ENCODE measurements at regions of chr19 and their contacts with region 1.

Region 1: GRCh38 chr19:10095948-10096621 is 6.4 kb downstream of the ANGPTL6 start:
- DNase-seq: peak; percentile 97
- ATAC-seq: peak; percentile 87
- H3K4me3 Mint-ChIP-seq: peak overlapping the region; percentile 32
- H3K27ac Mint-ChIP-seq: peak overlapping the region; percentile 59
- H3K4me1 Mint-ChIP-seq: peaks cover 50% of the 10 kb centered on the region
- H3K27me3 Mint-ChIP-seq: no peaks in the 10 kb centered on the region
- CTCF ChIP-seq: no peak

Region 2: GRCh38 chr19:10085641-10086590 is 10.2 kb before region 1 on chr19 and contains the start of gene SHFL:
- CTCF ChIA-PET with region 1: no interaction called
- POLR2A ChIA-PET with region 1: interaction called, 7 read pairs
- intact Hi-C with region 1: loop called (anchors 1 kb)
- DNase-seq: peak; percentile 82
- ATAC-seq: peak; percentile 92
- H3K4me3 Mint-ChIP-seq: peak within 1 kb of the TSS; percentile 90
- H3K27ac Mint-ChIP-seq: peak within 1 kb of the TSS; percentile 85
- H3K4me1 Mint-ChIP-seq: peaks cover 14% of the 10 kb centered on the region
- H3K27me3 Mint-ChIP-seq: no peaks in the 10 kb centered on the region
- CTCF ChIP-seq: no peak
- total RNA-seq, gene SHFL: 61.3 and 61.4 TPM in 2 replicates

Region 3: GRCh38 chr19:10112895-10113591 is 17.0 kb after region 1 on chr19:
- CTCF ChIA-PET with region 1: interaction called, 41 read pairs
- POLR2A ChIA-PET with region 1: interaction called, 297 read pairs
- intact Hi-C with region 1: loop called (anchors 1 kb)
- DNase-seq: peak; percentile 66
- ATAC-seq: peak; percentile 49
- H3K4me3 Mint-ChIP-seq: peak overlapping the region; percentile 76
- H3K27ac Mint-ChIP-seq: peak overlapping the region; percentile 82
- H3K4me1 Mint-ChIP-seq: peaks cover 40% of the 10 kb centered on the region
- H3K27me3 Mint-ChIP-seq: no peaks in the 10 kb centered on the region
- CTCF ChIP-seq: no peak

Region 4: DNA sequence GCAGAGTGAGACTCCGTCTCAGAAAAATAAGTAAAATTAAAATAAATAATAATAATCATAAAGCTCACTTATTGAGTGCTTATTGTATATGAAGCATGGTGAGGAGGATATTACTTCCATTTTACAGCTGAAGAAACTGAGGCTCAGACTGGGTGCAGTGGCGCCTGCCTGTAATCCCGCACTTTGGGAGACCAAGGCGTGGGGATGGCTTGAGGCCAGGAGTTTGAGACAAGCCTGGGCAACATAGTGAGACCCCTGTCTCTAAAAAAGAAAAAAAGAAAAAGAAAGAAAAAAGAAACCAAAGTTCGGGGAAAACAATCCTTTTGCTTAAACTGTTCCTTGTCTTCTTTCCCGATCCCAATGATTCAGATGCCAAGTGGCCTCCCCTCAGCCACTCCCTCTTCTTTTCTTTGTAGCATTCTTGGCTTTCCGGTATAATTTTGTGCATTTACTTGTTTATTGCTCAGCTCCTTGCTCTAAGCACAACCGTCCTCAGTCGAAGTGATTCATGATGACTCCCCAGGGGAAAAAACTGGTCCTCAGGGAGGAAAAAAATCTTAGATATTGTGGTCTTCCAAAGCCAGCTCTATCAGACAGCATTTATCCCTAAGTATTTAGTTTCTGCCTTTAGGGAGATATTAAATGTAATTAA is 24.6 kb after region 1 on chr19:
- CTCF ChIA-PET with region 1: interaction called, 6 read pairs
- POLR2A ChIA-PET with region 1: interaction called, 297 read pairs
- intact Hi-C with region 1: loop called (anchors 1 kb)
- DNase-seq: no peak
- ATAC-seq: no peak
- H3K4me3 Mint-ChIP-seq: no peak overlapping the region
- H3K27ac Mint-ChIP-seq: no peak overlapping the region
- H3K4me1 Mint-ChIP-seq: peaks cover 29% of the 10 kb centered on the region
- H3K27me3 Mint-ChIP-seq: no peaks in the 10 kb centered on the region
- CTCF ChIP-seq: no peak

Region 5: GRCh38 chr19:10180463-10180862 is 84.4 kb after region 1 on chr19:
- CTCF ChIA-PET with region 1: no interaction called
- POLR2A ChIA-PET with region 1: interaction called, 10 read pairs
- intact Hi-C with region 1: no loop called
- DNase-seq: no peak
- ATAC-seq: no peak
- H3K4me3 Mint-ChIP-seq: no peak overlapping the region
- H3K27ac Mint-ChIP-seq: no peak overlapping the region
- H3K4me1 Mint-ChIP-seq: no peaks in the 10 kb centered on the region
- H3K27me3 Mint-ChIP-seq: no peaks in the 10 kb centered on the region
- CTCF ChIP-seq: no peak

Region 6: DNA sequence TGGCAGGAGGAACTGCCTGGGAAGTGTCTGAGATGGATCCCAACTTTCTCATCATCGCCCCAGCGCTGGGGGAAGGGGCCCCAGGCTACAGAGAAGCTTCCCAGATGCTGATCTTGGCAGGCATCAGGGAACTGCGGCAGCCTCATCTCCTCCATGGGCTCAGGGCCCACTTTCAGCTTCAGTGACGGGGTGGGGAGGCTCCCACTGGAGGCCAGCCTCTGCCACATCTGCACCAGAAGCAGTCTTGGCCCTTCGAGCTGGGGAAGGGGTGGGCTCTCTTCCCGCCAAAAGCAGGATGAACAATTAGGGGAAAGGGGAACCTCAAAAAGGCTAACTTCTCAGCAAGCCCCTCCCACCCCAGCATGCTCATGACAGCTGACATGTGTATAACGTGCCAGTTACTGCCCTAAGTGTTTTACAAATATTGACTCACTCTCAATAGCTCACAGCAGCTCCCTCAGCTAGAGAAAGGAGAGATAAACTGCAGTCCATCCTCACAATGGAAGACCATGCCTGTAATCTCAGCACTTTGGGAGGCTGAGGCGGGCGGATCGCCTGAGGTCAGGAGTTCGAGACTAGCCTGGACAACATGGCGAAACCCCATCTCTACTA is 142.2 kb after region 1 on chr19:
- CTCF ChIA-PET with region 1: no interaction called
- POLR2A ChIA-PET with region 1: interaction called, 15 read pairs
- intact Hi-C with region 1: no loop called
- DNase-seq: no peak
- ATAC-seq: no peak
- H3K4me3 Mint-ChIP-seq: no peak overlapping the region
- H3K27ac Mint-ChIP-seq: peak overlapping the region; percentile 73
- H3K4me1 Mint-ChIP-seq: peaks cover 51% of the 10 kb centered on the region
- H3K27me3 Mint-ChIP-seq: no peaks in the 10 kb centered on the region
- CTCF ChIP-seq: no peak